ENCODE measurements at regions of chr5 and their contacts with region 1.

Region 1: GRCh38 chr5:10424124-10424731 is 17.5 kb upstream of the ROPN1L start:
- DNase-seq: peak; percentile 44
- ATAC-seq: 0 out of 2 replicates have a peak, but pooled peaks have one; percentile 33
- H3K4me3 ChIP-seq: no peak overlapping the region
- H3K27ac ChIP-seq: no peak overlapping the region
- H3K4me1 ChIP-seq: peaks cover 10% of the 10 kb centered on the region
- H3K27me3 ChIP-seq: no peaks in the 10 kb centered on the region
- CTCF ChIP-seq: peak; percentile 52
- POLR2A ChIP-seq: no peak
- RAD21 ChIP-seq: peak; percentile 56

Region 2: DNA sequence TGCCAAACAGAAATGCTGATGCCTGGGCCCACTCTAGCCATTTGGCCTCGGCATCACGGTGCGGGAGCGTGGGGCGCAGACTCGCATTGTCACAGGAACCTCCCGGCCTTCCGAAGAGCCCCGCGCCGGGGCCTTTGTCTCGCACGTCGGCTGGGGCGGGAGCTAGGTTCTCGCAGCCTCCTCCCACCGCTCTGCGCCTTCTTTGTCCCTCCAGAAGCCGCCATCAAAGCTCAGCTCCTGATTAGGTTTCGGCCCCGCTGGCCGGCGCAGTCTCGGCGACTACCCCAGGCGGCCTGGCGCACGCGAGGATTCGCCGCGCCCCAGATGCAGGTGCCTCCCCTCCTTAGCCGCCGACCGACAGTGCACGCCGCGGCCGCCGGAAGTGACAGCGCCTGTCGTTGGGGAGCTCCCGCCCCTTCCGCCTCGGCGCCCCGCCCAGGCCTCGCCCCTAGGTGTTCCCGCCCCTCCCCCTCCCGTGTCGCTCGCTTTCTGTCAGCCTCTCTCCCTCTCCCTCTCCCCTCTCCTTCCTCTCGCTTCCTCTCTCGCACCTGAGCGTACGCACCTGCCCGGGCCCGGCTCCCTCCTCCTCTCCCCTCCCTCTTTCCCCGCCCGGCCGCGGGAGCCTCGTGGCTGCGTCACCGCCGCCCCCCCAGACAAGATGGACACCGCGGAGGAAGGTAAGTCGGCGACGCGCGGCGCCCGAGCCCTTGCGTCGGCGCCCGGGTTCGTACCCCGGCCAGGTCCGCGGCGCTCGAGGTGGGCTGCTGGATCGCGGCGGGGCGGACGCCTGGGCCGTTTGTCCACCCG is 70.8 kb before region 1 on chr5 and contains the start of gene MARCHF6:
- CTCF ChIA-PET with region 1: no interaction called
- POLR2A ChIA-PET with region 1: no interaction called
- dilution Hi-C with region 1: no loop called
- in situ Hi-C with region 1: no loop called
- intact Hi-C with region 1: loop called (anchors 5 kb)
- DNase-seq: peak; percentile 84
- ATAC-seq: peak; percentile 90
- H3K4me3 ChIP-seq: peak within 1 kb of the TSS; percentile 92
- H3K27ac ChIP-seq: peak within 1 kb of the TSS; percentile 99
- H3K4me1 ChIP-seq: peaks cover 10% of the 10 kb centered on the region
- H3K27me3 ChIP-seq: no peaks in the 10 kb centered on the region
- CTCF ChIP-seq: no peak
- POLR2A ChIP-seq: peak; percentile 89
- RAD21 ChIP-seq: no peak
- total RNA-seq, gene MARCHF6: 55.2 and 71.4 TPM in 2 replicates

Measured in IMR-90 (cell line).